Thyroid gland (tissue), 4 donors: ENCODE measurements at regions of chr6 and their contacts with region 1.

Region 1: DNA sequence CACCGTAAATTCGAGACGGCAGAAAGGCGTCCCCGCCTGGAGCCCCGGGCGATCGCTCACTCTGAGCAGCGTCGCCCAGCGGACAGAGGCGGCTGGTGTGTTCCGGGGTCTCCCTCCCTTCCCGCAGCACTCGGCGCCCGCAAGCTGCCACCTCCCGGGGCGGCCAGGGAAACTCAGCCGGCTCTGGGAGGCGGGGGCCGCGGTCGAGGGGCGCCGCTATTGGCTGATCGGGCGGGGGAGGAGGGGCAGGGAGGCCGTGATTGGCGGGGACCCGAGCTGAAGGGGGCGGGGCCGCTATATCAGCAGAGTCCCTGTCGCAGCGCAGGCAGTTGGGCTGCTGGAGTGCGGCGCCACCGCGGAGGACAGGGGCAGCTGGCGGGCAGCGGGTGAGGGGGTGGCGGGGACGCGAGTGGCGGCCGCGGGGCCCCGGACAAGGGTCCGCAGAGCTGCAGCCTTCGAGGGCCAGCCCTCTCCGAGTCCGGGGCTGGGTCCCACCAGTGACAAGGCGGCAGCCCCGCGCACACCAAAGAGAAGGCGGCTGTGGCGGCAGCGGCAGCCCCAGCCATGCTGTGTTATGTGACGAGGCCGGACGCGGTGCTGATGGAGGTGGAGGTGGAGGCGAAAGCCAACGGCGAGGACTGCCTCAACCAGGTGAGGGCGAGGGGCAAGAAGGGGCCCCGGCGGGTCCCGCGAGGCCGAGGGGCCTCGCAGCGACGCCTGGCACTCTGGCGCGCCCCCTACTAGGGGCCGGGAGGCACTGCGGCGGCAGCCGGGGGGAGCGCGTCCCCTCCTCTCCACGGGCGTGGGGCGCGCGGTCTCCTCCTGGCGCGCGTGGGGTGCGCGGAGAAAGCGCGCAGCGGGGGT is at the start of gene MYLIP:
- DNase-seq: peak; percentile 98 to 99
- H3K4me3 ChIP-seq: peak within 1 kb of the TSS; percentile 95 to 99 (median 95)
- H3K27ac ChIP-seq: peak within 1 kb of the TSS; percentile 96 to 100 (median 99)
- H3K4me1 ChIP-seq: peaks cover 24 to 25% of the 10 kb centered on the region in 2 donors
- H3K27me3 ChIP-seq: no peaks in the 10 kb centered on the region
- CTCF ChIP-seq: peak; percentile 41 to 85 (median 74)
- POLR2A ChIP-seq: peak; percentile 98 to 99
- total RNA-seq, gene MYLIP: 61.8 to 108 (median 92.0) TPM

Region 2: GRCh38 chr6:16183187-16183664 is 54.2 kb after region 1 on chr6:
- intact Hi-C with region 1: loop called (anchors 10 kb)
- DNase-seq: no peak
- H3K4me3 ChIP-seq: no peak overlapping the region
- H3K27ac ChIP-seq: no peak overlapping the region
- H3K4me1 ChIP-seq: peaks cover 0 to 4% of the 10 kb centered on the region in 2 donors
- H3K27me3 ChIP-seq: no peaks in the 10 kb centered on the region
- CTCF ChIP-seq: peak; percentile 44 to 90 (median 68)
- POLR2A ChIP-seq: no peak